CD8-positive, alpha-beta T cell (primary cell): ENCODE measurements at regions of chr9 and their contacts with region 1.

Region 1: GRCh38 chr9:133677126-133678010 is 41.2 kb downstream of the DBH start:
- DNase-seq: peak; percentile 38 to 94 (median 66)
- ATAC-seq: peak; percentile 94
- H3K4me3 ChIP-seq: no peak overlapping the region
- H3K4me3 Mint-ChIP-seq: peak overlapping the region; percentile 68
- H3K27ac ChIP-seq: peak overlapping the region; percentile 64 to 79
- H3K27ac Mint-ChIP-seq: peak overlapping the region; percentile 100
- H3K4me1 ChIP-seq: peaks cover 28% of the 10 kb centered on the region
- H3K4me1 Mint-ChIP-seq: peaks cover 45% of the 10 kb centered on the region
- H3K27me3 ChIP-seq: no peaks in the 10 kb centered on the region
- H3K27me3 Mint-ChIP-seq: no peaks in the 10 kb centered on the region
- CTCF ChIP-seq: no peak

Region 2: DNA sequence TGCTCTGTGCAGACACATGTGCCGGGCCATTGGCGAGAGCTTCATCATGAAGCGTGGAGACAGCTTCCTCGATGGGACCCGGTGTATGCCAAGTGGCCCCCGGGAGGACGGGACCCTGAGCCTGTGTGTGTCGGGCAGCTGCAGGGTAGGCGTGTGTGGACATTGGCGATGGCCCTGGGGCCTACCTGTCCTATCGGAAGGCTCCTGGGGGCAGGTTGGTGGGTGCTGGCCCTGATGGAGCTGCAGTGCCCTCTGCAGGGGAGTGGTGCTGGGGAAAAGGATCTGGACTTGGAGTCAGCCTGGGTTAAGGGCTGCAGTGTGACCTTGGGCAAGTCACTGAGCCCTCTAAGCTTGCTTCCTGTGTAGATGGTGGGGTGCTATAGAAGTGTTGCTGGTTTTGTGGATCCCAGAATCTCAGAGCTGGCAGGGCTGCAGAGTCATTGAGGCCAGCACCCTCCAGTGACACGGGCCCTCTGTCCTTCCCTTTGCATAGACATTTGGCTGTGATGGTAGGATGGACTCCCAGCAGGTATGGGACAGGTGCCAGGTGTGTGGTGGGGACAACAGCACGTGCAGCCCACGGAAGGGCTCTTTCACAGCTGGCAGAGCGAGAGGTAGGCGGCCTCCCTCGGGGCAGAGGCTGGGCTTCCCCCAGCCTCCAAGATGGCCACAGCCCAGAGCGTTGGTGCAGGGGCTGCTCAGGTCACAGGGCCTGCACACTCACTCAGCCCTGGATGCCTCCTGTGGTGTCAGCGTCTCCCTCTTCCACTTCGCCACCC is 239.4 kb before region 1 on chr9:
- CTCF ChIA-PET with region 1: no interaction called
- POLR2A ChIA-PET with region 1: no interaction called
- intact Hi-C with region 1: no loop called
- DNase-seq: no peak
- ATAC-seq: no peak
- H3K4me3 ChIP-seq: no peak overlapping the region
- H3K4me3 Mint-ChIP-seq: no peak overlapping the region
- H3K27ac ChIP-seq: no peak overlapping the region
- H3K27ac Mint-ChIP-seq: no peak overlapping the region
- H3K4me1 ChIP-seq: no peaks in the 10 kb centered on the region
- H3K4me1 Mint-ChIP-seq: no peaks in the 10 kb centered on the region
- H3K27me3 ChIP-seq: no peaks in the 10 kb centered on the region
- H3K27me3 Mint-ChIP-seq: no peaks in the 10 kb centered on the region
- CTCF ChIP-seq: no peak

Region 3: DNA sequence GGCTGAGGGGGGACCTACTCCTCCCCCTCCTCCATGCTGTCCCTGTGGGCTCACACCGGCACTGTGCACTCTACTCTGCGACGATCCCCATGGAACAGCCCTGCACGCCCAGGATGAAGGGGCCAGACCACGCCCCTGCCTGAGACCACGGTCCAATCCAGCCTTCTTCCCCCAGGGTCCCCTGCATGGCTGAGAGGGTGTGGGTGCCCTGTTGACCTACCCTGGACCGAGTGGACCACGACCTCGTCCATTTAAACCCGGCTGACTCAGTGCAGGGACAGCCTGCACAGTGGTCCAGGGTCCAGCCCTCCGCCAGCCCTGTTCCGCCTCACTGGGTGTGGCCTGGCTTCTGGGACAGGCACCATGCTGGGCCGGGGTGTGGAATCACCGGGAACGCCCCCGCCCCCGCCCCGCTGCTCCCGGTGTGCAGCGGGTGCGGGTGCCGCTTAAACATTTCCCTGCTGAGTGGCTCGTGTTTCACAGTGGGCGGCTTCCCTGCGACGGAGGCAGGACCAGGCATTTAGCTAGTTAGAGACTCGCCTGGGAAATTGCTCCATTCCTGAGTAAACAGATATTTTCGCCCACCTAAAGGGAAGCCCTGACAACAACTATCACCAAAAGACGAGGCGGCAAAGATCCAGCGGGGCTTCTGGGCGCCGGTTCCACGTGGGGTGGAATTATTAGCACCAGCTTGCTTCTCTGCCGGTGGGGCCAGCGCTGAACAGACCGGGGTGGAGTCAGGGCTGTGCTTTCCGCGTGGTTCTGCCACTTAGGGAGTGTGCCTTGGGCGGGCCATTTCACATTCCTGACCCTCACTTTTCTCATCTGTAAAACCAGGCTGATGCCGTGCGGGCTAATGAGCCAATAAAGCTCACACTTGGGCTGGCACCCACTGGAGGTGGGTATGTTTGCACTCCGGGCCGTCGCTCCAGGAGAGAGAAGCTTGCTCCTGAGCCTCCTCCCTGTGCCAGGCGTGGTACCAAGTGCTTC is 18.6 kb before region 1 on chr9:
- CTCF ChIA-PET with region 1: interaction called, 5 read pairs
- POLR2A ChIA-PET with region 1: no interaction called
- intact Hi-C with region 1: loop called (anchors 2 kb)
- DNase-seq: no peak
- ATAC-seq: no peak
- H3K4me3 ChIP-seq: no peak overlapping the region
- H3K4me3 Mint-ChIP-seq: peak overlapping the region; percentile 54
- H3K27ac ChIP-seq: no peak overlapping the region
- H3K27ac Mint-ChIP-seq: peak overlapping the region; percentile 84
- H3K4me1 ChIP-seq: peaks cover 23% of the 10 kb centered on the region
- H3K4me1 Mint-ChIP-seq: peaks cover 41% of the 10 kb centered on the region
- H3K27me3 ChIP-seq: peaks cover 5 to 9% of the 10 kb centered on the region in 2 experiments
- H3K27me3 Mint-ChIP-seq: peaks cover 40% of the 10 kb centered on the region
- CTCF ChIP-seq: no peak

Region 4: DNA sequence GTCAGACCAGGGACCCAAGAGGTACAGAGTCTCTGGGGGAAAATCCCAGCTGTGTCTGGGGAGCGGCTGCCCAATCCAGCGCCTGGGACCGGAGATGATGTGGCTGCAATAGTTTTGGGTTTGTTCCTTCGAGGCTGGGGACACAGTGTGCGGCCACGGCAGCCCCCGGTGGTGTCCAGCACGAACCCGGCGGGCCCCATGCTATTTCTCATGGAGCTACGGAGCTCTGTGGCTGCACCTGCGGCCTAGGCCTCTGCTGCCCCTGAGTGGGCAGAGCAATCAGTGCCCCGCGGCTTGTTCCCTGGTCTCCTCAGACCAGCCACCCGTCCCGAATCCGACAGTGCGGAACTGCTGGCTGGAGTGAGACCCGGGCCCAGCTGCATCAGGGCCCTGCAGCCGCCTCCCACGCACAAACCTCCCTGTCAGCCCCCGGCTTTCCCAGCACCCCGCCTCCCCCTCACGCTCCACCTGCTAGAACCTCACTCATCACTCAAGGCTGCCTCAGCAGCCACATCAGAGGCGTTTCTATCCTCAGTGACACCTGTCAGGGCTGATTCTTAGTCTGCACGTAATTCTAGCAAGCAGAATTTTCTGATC is 31.7 kb after region 1 on chr9:
- CTCF ChIA-PET with region 1: interaction called, 6 read pairs
- POLR2A ChIA-PET with region 1: no interaction called
- intact Hi-C with region 1: loop called in 1 of 2 experiments (anchors 1 kb)
- DNase-seq: peak; percentile 38 to 91 (median 72)
- ATAC-seq: peak; percentile 98
- H3K4me3 ChIP-seq: no peak overlapping the region
- H3K4me3 Mint-ChIP-seq: peak overlapping the region; percentile 12
- H3K27ac ChIP-seq: no peak overlapping the region
- H3K27ac Mint-ChIP-seq: peak overlapping the region; percentile 49
- H3K4me1 ChIP-seq: peaks cover 30% of the 10 kb centered on the region
- H3K4me1 Mint-ChIP-seq: peaks cover 35% of the 10 kb centered on the region
- H3K27me3 ChIP-seq: no peaks in the 10 kb centered on the region
- H3K27me3 Mint-ChIP-seq: no peaks in the 10 kb centered on the region
- CTCF ChIP-seq: no peak